Heart left ventricle (tissue), 16 donors: ENCODE measurements at regions of chr10 and their contacts with region 1.

Region 1: DNA sequence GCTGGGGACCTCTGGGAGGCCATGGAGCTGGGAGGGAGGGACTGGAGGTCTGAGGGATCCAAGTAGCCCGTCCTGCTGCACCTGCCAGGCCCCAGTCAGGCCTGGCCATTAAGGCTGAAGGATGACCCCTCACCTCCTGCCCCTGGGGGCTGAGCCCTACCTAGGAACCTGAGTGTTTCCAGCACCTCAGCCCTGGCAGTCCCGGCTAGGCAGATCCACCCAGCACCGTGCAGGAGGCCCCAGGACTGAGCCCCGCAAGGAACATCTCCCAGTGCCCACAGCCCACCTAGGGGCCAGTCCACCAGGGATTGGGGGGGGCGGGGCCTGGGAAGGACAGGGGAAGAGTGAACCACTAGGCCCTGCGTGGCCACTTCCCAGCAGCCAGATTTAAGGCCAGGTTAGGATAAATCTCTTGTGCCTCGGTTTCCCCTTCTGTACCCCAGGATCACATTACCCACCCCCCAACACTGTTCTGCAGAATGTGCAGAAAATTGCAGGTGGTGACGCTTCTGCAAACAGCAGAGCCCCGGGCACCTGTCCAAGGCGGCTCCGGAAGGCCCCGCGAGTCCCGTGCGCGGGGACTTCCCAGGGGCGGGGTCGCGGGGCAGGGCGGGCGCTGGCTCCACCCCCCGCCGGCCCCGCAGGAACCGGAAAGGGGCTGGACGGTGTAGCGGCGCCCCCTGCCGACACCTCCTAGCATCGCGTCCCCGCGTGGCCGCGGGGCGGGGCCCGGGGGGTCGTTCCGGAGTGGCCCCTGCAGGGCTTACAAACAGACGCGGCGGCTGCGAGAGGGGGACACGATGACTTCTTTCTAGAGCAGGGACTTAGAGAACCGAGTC is 55.9 kb downstream of the PWWP2B start:
- DNase-seq: peak; percentile 80 to 92 (median 87)
- ATAC-seq: peak; percentile 56 to 86 (median 78)
- H3K4me3 ChIP-seq: peak overlapping the region in 9 of 12 donors; percentile 1 to 37 (median 17)
- H3K27ac ChIP-seq: peak overlapping the region in 1 of 12 donors; percentile 43
- H3K4me1 ChIP-seq: peaks cover 0 to 29% (median 12%) of the 10 kb centered on the region in 12 donors
- H3K27me3 ChIP-seq: peaks cover 0 to 5% (median 0%) of the 10 kb centered on the region in 9 donors
- CTCF ChIP-seq: peak; percentile 92 to 99 (median 97)
- POLR2A ChIP-seq: no peak

Region 2: DNA sequence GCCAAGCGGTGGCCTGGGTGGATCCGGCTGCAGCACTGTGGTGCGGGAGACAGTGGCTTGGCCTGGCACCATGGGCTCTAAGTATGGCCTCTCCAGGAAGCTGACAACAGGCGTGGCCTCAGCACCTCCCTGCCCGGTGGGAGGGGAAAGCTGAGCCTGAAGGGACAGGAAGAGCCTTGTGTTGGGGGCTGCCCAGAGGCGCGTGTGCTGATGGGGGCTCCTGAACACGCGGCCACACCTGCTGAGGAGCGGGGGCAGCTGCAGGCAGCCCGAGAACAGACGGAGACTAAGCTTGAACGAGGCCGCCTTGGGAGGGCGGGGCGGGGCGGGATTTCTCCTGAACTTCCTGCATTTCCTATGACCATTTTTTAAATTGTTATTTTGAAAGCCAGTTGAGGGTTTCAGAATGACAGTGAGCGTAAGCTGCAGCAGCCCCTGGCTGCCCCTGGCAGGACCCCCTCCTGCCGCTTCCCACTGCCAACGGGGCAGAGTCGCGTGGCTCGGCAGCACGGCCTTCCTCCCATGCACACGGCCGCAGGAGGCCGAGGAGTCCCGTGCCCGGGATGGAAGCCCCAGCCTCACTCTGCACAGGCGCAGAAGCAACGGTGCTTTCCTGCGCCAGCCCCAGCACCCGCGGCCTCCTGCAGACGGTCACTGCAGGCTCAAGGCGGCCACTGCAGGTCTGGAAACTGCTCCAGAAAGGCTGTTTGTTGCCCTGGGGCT is 222.9 kb before region 1 on chr10:
- intact Hi-C with region 1: loop called in 1 of 10 experiments (anchors 5 kb)
- DNase-seq: peak in 3 of 5 donors; percentile 45 to 79 (median 49)
- ATAC-seq: peak; percentile 45 to 55 (median 48)
- H3K4me3 ChIP-seq: peak overlapping the region in 9 of 12 donors; percentile 28 to 54 (median 40)
- H3K27ac ChIP-seq: peak overlapping the region in 9 of 12 donors; percentile 5 to 87 (median 39)
- H3K4me1 ChIP-seq: peaks cover 0 to 58% (median 0%) of the 10 kb centered on the region in 12 donors
- H3K27me3 ChIP-seq: no peaks in the 10 kb centered on the region
- CTCF ChIP-seq: no peak
- POLR2A ChIP-seq: no peak

Region 3: DNA sequence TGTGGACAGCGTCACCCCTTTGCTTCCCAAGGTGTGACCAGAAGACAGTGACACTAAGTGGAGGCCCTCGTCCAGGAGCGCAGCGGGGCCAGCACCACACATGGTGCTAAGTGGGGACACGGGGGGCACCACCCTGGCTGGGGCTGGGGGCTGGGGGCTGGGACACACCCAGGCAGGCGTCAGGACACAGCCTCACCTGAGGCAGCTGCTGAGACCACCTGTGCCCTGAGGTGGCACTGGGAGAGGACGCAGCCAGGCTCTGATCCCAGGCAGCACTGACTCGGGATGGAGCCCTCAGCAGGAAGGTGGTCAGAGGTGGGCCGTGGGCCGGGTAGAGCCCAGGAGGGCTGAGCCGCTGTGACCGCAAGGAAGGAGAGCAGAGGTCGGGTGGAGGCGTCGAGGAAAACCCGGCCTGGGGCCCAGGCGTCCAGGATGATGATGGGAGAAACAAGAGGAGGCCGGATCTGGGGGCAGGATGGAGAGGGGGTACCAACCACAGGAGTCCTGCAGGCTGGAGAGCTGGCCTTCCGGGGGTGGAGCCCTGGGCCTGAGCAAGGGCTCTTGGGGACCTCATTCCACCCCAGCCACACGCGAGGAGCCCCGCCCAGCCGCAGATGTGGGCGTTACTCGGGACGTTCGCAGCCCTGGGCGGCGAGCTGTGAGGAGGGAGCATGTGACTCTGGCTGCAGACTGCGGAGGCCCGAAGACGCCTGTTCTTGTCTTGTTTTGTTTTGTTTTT is 98.3 kb before region 1 on chr10:
- intact Hi-C with region 1: no loop called
- DNase-seq: no peak
- ATAC-seq: no peak
- H3K4me3 ChIP-seq: no peak overlapping the region
- H3K27ac ChIP-seq: no peak overlapping the region
- H3K4me1 ChIP-seq: no peaks in the 10 kb centered on the region
- H3K27me3 ChIP-seq: no peaks in the 10 kb centered on the region
- CTCF ChIP-seq: no peak
- POLR2A ChIP-seq: no peak

Region 4: GRCh38 chr10:132387764-132388210 is 65.1 kb before region 1 on chr10:
- intact Hi-C with region 1: loop called (anchors 1 to 5 kb)
- DNase-seq: peak; percentile 68 to 90 (median 76)
- ATAC-seq: peak; percentile 51 to 77 (median 70)
- H3K4me3 ChIP-seq: no peak overlapping the region
- H3K27ac ChIP-seq: peak overlapping the region in 2 of 12 donors; percentile 13 to 37
- H3K4me1 ChIP-seq: peaks cover 0 to 20% (median 6%) of the 10 kb centered on the region in 12 donors
- H3K27me3 ChIP-seq: peaks cover 0 to 3% (median 0%) of the 10 kb centered on the region in 9 donors
- CTCF ChIP-seq: peak; percentile 44 to 69 (median 61)
- POLR2A ChIP-seq: no peak

Region 5: DNA sequence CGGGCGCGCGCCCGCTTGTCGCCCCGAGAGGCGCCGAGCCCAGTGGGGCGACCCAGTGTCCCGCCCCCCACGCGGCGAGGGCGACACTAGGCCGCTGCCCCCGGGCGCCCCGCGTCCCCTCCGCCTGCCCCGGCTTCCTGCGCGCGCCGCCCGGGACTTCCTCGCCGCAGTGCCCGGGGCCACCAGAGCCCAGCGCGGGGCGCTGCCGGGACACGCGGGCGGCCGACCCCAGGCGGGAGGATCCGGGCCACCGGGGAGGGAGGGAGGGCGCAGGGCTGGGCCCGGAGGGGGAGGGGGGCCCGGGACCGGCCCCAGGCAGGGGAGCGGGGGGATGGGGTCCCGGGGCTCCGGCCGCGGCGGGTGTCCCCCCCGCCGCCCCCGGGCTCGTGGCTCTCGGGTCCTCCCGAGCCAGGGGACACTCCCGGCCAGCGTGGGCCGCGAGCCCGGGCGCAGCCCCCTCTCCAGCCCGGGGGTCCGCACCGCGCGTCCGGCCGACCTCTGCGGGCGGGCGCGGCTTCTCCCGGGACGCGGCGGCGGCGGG is 56.3 kb before region 1 on chr10:
- intact Hi-C with region 1: loop called in 3 of 10 experiments (anchors 2 kb)
- DNase-seq: peak; percentile 68 to 85 (median 75)
- ATAC-seq: peak in 3 of 4 donors; percentile 43 to 59 (median 53)
- H3K4me3 ChIP-seq: peak overlapping the region; percentile 21 to 98 (median 70)
- H3K27ac ChIP-seq: peak overlapping the region; percentile 86 to 99 (median 96)
- H3K4me1 ChIP-seq: peaks cover 0 to 63% (median 39%) of the 10 kb centered on the region in 12 donors
- H3K27me3 ChIP-seq: no peaks in the 10 kb centered on the region
- CTCF ChIP-seq: peak in 8 of 12 donors; percentile 7 to 54 (median 36)
- POLR2A ChIP-seq: no peak

Region 6: GRCh38 chr10:132616170-132616995 is 163.5 kb after region 1 on chr10:
- intact Hi-C with region 1: no loop called
- DNase-seq: peak in 2 of 5 donors; percentile 16 to 61
- ATAC-seq: peak in 1 of 4 donors; percentile 3
- H3K4me3 ChIP-seq: no peak overlapping the region
- H3K27ac ChIP-seq: no peak overlapping the region
- H3K4me1 ChIP-seq: peaks cover 0 to 32% (median 2%) of the 10 kb centered on the region in 12 donors
- H3K27me3 ChIP-seq: no peaks in the 10 kb centered on the region
- CTCF ChIP-seq: no peak
- POLR2A ChIP-seq: no peak

Region 7: GRCh38 chr10:132684164-132684891 is 231.5 kb after region 1 on chr10:
- intact Hi-C with region 1: no loop called
- DNase-seq: peak in 2 of 5 donors; percentile 3 to 16
- ATAC-seq: peak in 1 of 4 donors; percentile 11
- H3K4me3 ChIP-seq: no peak overlapping the region
- H3K27ac ChIP-seq: no peak overlapping the region
- H3K4me1 ChIP-seq: peaks cover 0 to 21% (median 9%) of the 10 kb centered on the region in 12 donors
- H3K27me3 ChIP-seq: no peaks in the 10 kb centered on the region
- CTCF ChIP-seq: no peak
- POLR2A ChIP-seq: no peak

Region 8: GRCh38 chr10:132724446-132724845 is 271.6 kb after region 1 on chr10:
- intact Hi-C with region 1: no loop called
- DNase-seq: no peak
- ATAC-seq: no peak
- H3K4me3 ChIP-seq: no peak overlapping the region
- H3K27ac ChIP-seq: no peak overlapping the region
- H3K4me1 ChIP-seq: peaks cover 0 to 9% (median 0%) of the 10 kb centered on the region in 12 donors
- H3K27me3 ChIP-seq: no peaks in the 10 kb centered on the region
- CTCF ChIP-seq: no peak
- POLR2A ChIP-seq: no peak